Uterus (tissue), 4 donors: ENCODE measurements at regions of chr3 and their contacts with region 1.

Region 1: DNA sequence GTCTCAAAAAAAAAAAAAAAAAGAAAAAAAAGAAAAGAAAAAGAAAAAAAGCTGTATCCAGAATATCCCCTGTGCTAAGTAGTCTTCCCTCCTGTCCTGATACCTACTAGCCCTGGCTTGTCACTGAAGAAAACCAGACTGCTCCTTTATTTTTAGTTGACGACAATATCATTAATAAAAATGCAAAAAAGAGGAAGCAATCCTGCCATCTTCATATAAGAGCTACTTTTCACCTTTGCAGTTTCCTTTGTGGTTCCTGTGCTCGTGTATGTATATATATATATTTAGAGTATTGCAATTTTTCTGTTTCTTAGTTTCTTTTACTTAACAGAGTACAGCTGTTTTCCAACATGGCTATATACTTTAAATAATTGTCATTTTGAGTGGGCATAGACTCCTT is 13.6 kb downstream of the C3orf20 start:
- DNase-seq: no peak
- H3K4me3 ChIP-seq: no peak overlapping the region
- H3K27ac ChIP-seq: no peak overlapping the region
- H3K4me1 ChIP-seq: no peaks in the 10 kb centered on the region
- H3K27me3 ChIP-seq: no peaks in the 10 kb centered on the region
- CTCF ChIP-seq: no peak
- POLR2A ChIP-seq: no peak

Region 2: GRCh38 chr3:14064910-14065309 is 623.6 kb before region 1 on chr3:
- intact Hi-C with region 1: no loop called
- DNase-seq: no peak
- H3K4me3 ChIP-seq: no peak overlapping the region
- H3K27ac ChIP-seq: no peak overlapping the region
- H3K4me1 ChIP-seq: no peaks in the 10 kb centered on the region
- H3K27me3 ChIP-seq: no peaks in the 10 kb centered on the region
- CTCF ChIP-seq: no peak
- POLR2A ChIP-seq: no peak

Region 3: GRCh38 chr3:14587740-14588360 is 100.7 kb before region 1 on chr3:
- intact Hi-C with region 1: no loop called
- DNase-seq: no peak
- H3K4me3 ChIP-seq: no peak overlapping the region
- H3K27ac ChIP-seq: no peak overlapping the region
- H3K4me1 ChIP-seq: no peaks in the 10 kb centered on the region
- H3K27me3 ChIP-seq: no peaks in the 10 kb centered on the region
- CTCF ChIP-seq: no peak
- POLR2A ChIP-seq: no peak

Region 4: DNA sequence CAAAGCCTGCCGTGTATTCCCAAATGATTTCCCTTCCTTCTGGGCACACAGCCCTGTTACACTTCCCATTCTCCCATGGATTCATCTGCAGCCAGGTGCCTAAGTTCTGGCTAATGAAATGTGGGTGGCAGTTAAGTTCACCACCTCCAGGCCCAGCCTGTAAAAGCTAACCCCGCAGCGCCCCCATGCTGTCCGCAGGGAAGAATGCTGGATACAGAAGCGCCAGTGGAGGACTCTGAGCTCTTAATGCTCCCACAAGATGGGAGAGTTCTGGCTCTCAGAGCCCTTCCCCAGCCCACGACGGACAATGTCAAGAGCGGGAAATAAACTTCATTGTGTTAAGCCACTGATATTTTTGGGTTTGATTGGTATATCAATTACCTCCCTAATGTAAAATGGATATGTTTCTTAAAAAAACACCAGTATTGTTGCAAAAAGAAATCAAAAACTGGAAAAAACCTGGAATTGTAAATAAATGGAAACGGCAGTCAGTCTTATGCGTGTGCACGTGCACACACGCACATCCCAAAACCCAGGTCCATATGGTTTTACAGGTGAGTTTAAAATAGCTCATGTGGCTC is 92.5 kb after region 1 on chr3:
- intact Hi-C with region 1: loop called (anchors 10 kb)
- DNase-seq: peak in 1 of 2 donors; percentile 40
- H3K4me3 ChIP-seq: no peak overlapping the region
- H3K27ac ChIP-seq: no peak overlapping the region
- H3K4me1 ChIP-seq: no peaks in the 10 kb centered on the region
- H3K27me3 ChIP-seq: no peaks in the 10 kb centered on the region
- CTCF ChIP-seq: peak; percentile 25 to 39 (median 34)
- POLR2A ChIP-seq: no peak